B cell (primary cell): ENCODE measurements at regions of chr11 and their contacts with region 1.

Region 1: GRCh38 chr11:32893343-32894148 is 935 bp downstream of the QSER1 start:
- DNase-seq: peak; percentile 79
- ATAC-seq: peak; percentile 44
- H3K4me3 ChIP-seq: peak overlapping the region; percentile 22 to 88 (median 83)
- H3K4me3 Mint-ChIP-seq: peak overlapping the region; percentile 88
- H3K27ac ChIP-seq: peak overlapping the region; percentile 61 to 70
- H3K27ac Mint-ChIP-seq: peak overlapping the region; percentile 93
- H3K4me1 ChIP-seq: peaks cover 12 to 16% of the 10 kb centered on the region in 2 donors
- H3K4me1 Mint-ChIP-seq: peaks cover 36% of the 10 kb centered on the region
- H3K27me3 ChIP-seq: no peaks in the 10 kb centered on the region
- H3K27me3 Mint-ChIP-seq: no peaks in the 10 kb centered on the region
- CTCF ChIP-seq: peak; percentile 63

Region 2: DNA sequence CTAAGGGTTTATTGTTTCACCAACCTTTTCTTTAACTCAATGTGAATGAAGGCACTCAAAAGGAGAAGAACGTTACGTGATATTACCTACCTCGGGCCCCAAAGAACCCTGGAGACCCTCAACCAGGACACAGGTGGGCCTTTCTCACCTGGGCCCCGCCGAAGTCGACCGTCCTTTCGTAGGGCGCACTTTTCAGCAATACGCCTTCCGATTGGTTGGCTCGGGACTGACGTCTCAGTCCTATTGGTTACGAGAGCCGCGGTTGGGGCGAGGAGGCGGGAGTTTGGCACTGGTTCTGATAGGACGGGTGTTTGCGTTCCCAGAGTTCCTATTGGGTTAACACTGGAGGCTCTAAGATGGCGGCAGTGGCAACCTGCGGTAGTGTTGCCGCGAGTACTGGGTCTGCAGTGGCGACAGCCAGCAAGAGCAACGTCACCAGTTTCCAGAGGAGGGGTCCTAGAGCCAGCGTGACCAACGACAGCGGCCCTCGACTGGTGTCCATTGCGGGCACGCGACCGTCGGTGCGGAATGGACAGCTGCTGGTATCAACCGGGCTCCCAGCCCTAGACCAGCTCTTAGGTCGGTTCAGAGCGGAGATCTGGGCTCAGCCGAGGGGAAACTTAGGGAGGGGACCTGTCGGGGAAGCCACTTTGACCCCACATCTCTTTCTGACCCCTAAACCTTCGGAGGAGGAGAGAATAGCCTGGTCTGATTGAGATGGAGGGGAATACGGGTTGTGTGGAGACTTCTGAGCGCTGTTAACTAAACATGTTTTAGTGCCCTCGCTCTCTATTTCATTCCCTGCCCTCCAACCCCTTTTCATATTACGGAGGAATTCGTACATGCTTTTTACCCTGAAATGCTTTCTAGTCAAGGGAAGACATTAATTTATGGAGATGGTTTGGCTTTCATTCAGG is 1383.9 kb before region 1 on chr11 and contains the starts of genes ELP4 and IMMP1L:
- CTCF ChIA-PET with region 1: no interaction called
- POLR2A ChIA-PET with region 1: no interaction called
- intact Hi-C with region 1: loop called (anchors 5 kb)
- DNase-seq: peak; percentile 97
- ATAC-seq: peak; percentile 99
- H3K4me3 ChIP-seq: peak within 1 kb of the TSS; percentile 82 to 100 (median 92)
- H3K4me3 Mint-ChIP-seq: peak within 1 kb of the TSS; percentile 91
- H3K27ac ChIP-seq: peak within 1 kb of the TSS; percentile 89 to 91
- H3K27ac Mint-ChIP-seq: peak within 1 kb of the TSS; percentile 91
- H3K4me1 ChIP-seq: peaks cover 6 to 19% of the 10 kb centered on the region in 2 donors
- H3K4me1 Mint-ChIP-seq: peaks cover 38% of the 10 kb centered on the region
- H3K27me3 ChIP-seq: no peaks in the 10 kb centered on the region
- H3K27me3 Mint-ChIP-seq: no peaks in the 10 kb centered on the region
- CTCF ChIP-seq: no peak
- total RNA-seq, gene ELP4: 30.8 and 31.3 TPM in 2 replicates
- total RNA-seq, gene IMMP1L: 16.5 and 23.2 TPM in 2 replicates

Region 3: DNA sequence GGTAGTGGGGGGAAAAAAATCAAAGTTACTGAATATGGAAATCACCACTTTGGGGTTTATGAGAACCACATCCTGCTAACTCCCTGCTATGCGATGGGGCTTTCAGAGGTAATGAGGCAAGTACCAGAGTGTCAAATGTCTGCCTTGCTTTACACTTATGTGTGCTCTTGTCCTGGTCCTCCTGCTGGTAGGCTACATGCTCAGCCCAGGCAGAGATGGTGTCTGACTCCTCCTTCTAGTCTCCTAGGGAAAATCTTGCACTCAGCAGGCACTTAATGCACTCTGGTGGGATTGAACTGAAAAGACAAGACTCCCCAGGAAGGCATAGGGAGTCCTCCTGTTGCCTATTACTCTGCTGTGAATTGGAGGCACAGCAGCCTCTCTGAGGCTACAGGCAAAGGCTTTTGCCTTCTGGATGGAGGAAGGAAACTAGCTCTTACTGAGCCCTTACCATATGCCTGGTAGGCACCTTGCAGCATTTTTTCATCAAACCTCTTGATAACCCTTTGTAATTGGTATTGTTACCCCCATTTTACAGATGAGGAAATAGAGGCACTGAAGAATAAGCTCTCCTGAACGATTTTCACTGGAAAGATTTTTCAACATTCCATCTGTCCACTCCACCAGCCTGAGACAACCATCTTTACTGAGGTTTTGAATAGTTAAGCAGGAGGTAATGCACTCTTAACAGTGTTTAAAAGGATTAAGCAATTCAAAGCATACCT is 950.3 kb before region 1 on chr11:
- CTCF ChIA-PET with region 1: no interaction called
- POLR2A ChIA-PET with region 1: no interaction called
- intact Hi-C with region 1: no loop called
- DNase-seq: no peak
- ATAC-seq: no peak
- H3K4me3 ChIP-seq: no peak overlapping the region
- H3K4me3 Mint-ChIP-seq: no peak overlapping the region
- H3K27ac ChIP-seq: no peak overlapping the region
- H3K27ac Mint-ChIP-seq: no peak overlapping the region
- H3K4me1 ChIP-seq: no peaks in the 10 kb centered on the region
- H3K4me1 Mint-ChIP-seq: no peaks in the 10 kb centered on the region
- H3K27me3 ChIP-seq: peaks cover 0 to 3% (median 1%) of the 10 kb centered on the region in 4 experiments
- H3K27me3 Mint-ChIP-seq: peaks cover 27% of the 10 kb centered on the region
- CTCF ChIP-seq: no peak

Region 4: GRCh38 chr11:32583459-32584271 is 309.9 kb before region 1 on chr11 and contains the start of gene EIF3M:
- CTCF ChIA-PET with region 1: no interaction called
- POLR2A ChIA-PET with region 1: no interaction called
- intact Hi-C with region 1: loop called (anchors 1 kb)
- DNase-seq: peak; percentile 96
- ATAC-seq: peak; percentile 99
- H3K4me3 ChIP-seq: peak within 1 kb of the TSS; percentile 84 to 97 (median 88)
- H3K4me3 Mint-ChIP-seq: peak within 1 kb of the TSS; percentile 98
- H3K27ac ChIP-seq: peak within 1 kb of the TSS; percentile 67 to 87
- H3K27ac Mint-ChIP-seq: peak within 1 kb of the TSS; percentile 97
- H3K4me1 ChIP-seq: peaks cover 18 to 20% of the 10 kb centered on the region in 2 donors
- H3K4me1 Mint-ChIP-seq: peaks cover 40% of the 10 kb centered on the region
- H3K27me3 ChIP-seq: no peaks in the 10 kb centered on the region
- H3K27me3 Mint-ChIP-seq: no peaks in the 10 kb centered on the region
- CTCF ChIP-seq: no peak
- total RNA-seq, gene EIF3M: 174 and 177 TPM in 2 replicates

Region 5: DNA sequence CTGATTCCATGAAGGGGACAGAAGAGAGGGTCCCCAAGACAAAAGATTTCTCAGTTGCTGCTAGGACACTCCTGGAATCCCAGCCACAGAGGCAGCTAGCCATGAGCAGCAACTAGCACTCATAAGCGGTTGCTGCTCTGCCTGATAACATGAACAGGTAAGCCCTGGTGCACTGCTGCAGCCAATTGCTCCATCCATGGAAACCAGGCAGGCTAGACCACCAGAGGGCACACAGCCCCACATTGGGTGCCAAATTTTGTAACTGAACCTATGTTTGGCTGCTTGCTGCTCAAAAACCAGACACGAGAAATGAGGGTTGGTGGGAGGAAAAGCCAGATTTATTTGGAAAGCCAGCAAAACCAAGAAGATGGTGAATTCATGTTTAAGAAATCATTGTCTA is 22.9 kb before region 1 on chr11:
- CTCF ChIA-PET with region 1: no interaction called
- POLR2A ChIA-PET with region 1: no interaction called
- intact Hi-C with region 1: no loop called
- DNase-seq: peak; percentile 25
- ATAC-seq: no peak
- H3K4me3 ChIP-seq: no peak overlapping the region
- H3K4me3 Mint-ChIP-seq: no peak overlapping the region
- H3K27ac ChIP-seq: no peak overlapping the region
- H3K27ac Mint-ChIP-seq: no peak overlapping the region
- H3K4me1 ChIP-seq: no peaks in the 10 kb centered on the region
- H3K4me1 Mint-ChIP-seq: no peaks in the 10 kb centered on the region
- H3K27me3 ChIP-seq: peaks cover 0 to 7% (median 0%) of the 10 kb centered on the region in 4 experiments
- H3K27me3 Mint-ChIP-seq: peaks cover 16% of the 10 kb centered on the region
- CTCF ChIP-seq: peak; percentile 43

Region 6: GRCh38 chr11:33039274-33040032 is 145.9 kb after region 1 on chr11 and contains the start of gene TCP11L1:
- CTCF ChIA-PET with region 1: no interaction called
- POLR2A ChIA-PET with region 1: interaction called, 12 read pairs
- intact Hi-C with region 1: loop called (anchors 1 kb)
- DNase-seq: peak; percentile 90
- ATAC-seq: peak; percentile 84
- H3K4me3 ChIP-seq: peak within 1 kb of the TSS; percentile 77 to 99 (median 95)
- H3K4me3 Mint-ChIP-seq: peak within 1 kb of the TSS; percentile 96
- H3K27ac ChIP-seq: peak within 1 kb of the TSS; percentile 79 to 88
- H3K27ac Mint-ChIP-seq: peak within 1 kb of the TSS; percentile 94
- H3K4me1 ChIP-seq: peaks cover 8 to 18% of the 10 kb centered on the region in 2 donors
- H3K4me1 Mint-ChIP-seq: peaks cover 16% of the 10 kb centered on the region
- H3K27me3 ChIP-seq: no peaks in the 10 kb centered on the region
- H3K27me3 Mint-ChIP-seq: peaks cover 8% of the 10 kb centered on the region
- CTCF ChIP-seq: no peak
- total RNA-seq, gene TCP11L1: 19.7 and 19.8 TPM in 2 replicates

Region 7: GRCh38 chr11:33773987-33774735 is 880.6 kb after region 1 on chr11 and contains the start of gene FBXO3:
- CTCF ChIA-PET with region 1: no interaction called
- POLR2A ChIA-PET with region 1: no interaction called
- intact Hi-C with region 1: loop called (anchors 10 kb)
- DNase-seq: peak; percentile 90
- ATAC-seq: peak; percentile 94
- H3K4me3 ChIP-seq: peak within 1 kb of the TSS; percentile 66 to 91 (median 86)
- H3K4me3 Mint-ChIP-seq: peak within 1 kb of the TSS; percentile 92
- H3K27ac ChIP-seq: peak within 1 kb of the TSS; percentile 57 to 82
- H3K27ac Mint-ChIP-seq: peak within 1 kb of the TSS; percentile 95
- H3K4me1 ChIP-seq: peaks cover 21 to 24% of the 10 kb centered on the region in 2 donors
- H3K4me1 Mint-ChIP-seq: peaks cover 40% of the 10 kb centered on the region
- H3K27me3 ChIP-seq: peaks cover 0 to 22% (median 9%) of the 10 kb centered on the region in 4 experiments
- H3K27me3 Mint-ChIP-seq: peaks cover 19% of the 10 kb centered on the region
- CTCF ChIP-seq: no peak
- total RNA-seq, gene FBXO3: 32.7 and 34.3 TPM in 2 replicates